AG04450 (cell line): ENCODE measurements at regions of chr14 and their contacts with region 1.

Region 1: DNA sequence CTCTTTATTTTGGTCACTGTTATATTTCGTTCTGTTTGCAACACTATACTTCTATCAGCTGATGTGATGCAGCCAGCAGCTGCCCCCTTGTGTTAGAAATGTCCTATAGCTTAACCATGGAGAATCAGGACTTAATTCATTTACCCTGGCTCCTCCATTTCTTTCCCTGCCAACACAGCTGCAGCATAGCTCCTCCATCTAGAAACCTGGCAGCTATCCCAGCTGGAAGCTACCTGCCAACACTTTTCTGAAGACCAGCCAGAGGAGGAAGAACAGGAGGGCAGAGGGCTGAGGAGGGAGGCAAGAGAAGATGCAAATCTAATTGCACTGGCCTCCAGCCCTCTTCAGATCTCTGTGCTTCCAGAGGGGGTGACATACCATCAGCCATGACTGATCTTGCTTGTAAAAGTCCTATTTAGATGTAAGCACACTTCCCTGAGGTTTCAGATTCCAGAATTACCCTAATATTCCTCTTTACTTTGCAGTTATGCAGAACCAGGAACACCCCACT is 156.8 kb upstream of the TMEM260 start:
- DNase-seq: peak; percentile 55
- H3K4me3 ChIP-seq: no peak overlapping the region
- H3K27ac ChIP-seq: no peak overlapping the region
- H3K27me3 ChIP-seq: peaks cover 13% of the 10 kb centered on the region
- CTCF ChIP-seq: peak; percentile 88

Region 2: GRCh38 chr14:56100556-56100955 is 322.2 kb before region 1 on chr14:
- CTCF ChIA-PET with region 1: no interaction called
- POLR2A ChIA-PET with region 1: no interaction called
- DNase-seq: no peak
- H3K4me3 ChIP-seq: no peak overlapping the region
- H3K27ac ChIP-seq: no peak overlapping the region
- H3K27me3 ChIP-seq: peaks cover 2% of the 10 kb centered on the region
- CTCF ChIP-seq: no peak

Region 3: DNA sequence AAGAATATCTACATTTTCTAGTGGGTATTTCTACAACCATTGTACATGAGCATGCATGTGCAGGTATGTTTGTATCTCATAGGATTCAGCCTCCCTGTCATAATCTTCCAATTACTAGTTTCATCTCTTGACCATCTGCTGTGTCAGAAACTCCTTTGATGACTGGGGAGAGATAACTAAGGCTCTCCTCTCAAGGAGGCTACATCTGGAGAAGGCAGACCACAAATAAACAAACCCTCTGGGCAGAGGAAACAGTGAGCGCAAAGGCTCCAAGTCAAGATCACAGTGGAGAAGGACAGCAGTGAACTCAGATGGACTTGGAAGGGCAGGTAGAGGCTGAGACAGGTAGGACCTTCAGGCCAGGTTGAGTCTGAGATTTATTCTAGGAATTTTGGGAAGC is 138.1 kb before region 1 on chr14:
- CTCF ChIA-PET with region 1: no interaction called
- POLR2A ChIA-PET with region 1: no interaction called
- DNase-seq: no peak
- H3K4me3 ChIP-seq: no peak overlapping the region
- H3K27ac ChIP-seq: no peak overlapping the region
- H3K27me3 ChIP-seq: no peaks in the 10 kb centered on the region
- CTCF ChIP-seq: no peak

Region 4: GRCh38 chr14:56379956-56380355 is 42.8 kb before region 1 on chr14:
- CTCF ChIA-PET with region 1: interaction called, 10 read pairs
- POLR2A ChIA-PET with region 1: no interaction called
- DNase-seq: no peak
- H3K4me3 ChIP-seq: no peak overlapping the region
- H3K27ac ChIP-seq: no peak overlapping the region
- H3K27me3 ChIP-seq: no peaks in the 10 kb centered on the region
- CTCF ChIP-seq: no peak

Region 5: GRCh38 chr14:56412468-56413434 is 10.0 kb before region 1 on chr14:
- CTCF ChIA-PET with region 1: interaction called, 12 read pairs
- POLR2A ChIA-PET with region 1: no interaction called
- DNase-seq: no peak
- H3K4me3 ChIP-seq: no peak overlapping the region
- H3K27ac ChIP-seq: no peak overlapping the region
- H3K27me3 ChIP-seq: peaks cover 9% of the 10 kb centered on the region
- CTCF ChIP-seq: no peak